Aorta (tissue), 5 donors: ENCODE measurements at regions of chr12 and their contacts with region 1.

Region 1: DNA sequence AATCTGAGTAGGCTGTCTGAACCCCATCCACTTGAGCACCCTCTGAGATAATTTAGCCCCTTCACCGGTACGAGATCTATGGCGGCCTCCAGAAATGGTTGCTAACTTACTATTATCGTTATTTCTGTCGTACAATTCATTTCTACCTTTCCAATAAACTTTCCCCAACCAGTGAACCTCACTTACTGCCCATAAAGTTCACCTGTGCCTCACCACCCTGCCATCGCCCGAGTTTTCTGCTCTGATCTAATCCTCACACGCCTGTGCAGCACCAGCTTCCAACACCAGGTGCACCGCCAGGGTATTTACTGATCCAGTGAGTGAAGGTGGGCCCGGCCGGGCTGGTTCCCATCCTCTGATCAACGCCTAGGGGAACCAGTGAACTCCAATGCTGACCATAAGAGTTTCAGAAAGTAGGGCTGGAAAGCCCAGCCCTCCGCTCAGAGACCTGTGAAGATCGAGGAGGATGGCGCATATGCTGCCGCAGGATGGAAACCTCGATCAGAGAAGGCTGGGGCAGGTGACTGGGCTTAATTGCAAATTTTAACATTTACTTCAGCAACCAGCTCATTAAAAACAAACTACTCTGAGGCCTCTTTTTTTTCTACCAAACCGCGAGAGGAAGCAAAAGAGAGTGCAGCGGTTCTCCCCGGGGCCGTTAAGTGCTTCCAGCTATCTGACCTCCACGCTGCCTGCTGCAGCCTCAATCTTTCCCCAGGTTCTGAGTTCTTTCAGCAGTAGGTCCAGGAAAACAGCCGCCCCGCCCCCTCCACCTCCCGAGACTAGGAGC is 664 bp upstream of the MYL6B start:
- DNase-seq: peak; percentile 62 to 85
- ATAC-seq: peak; percentile 24
- H3K4me3 ChIP-seq: peak overlapping the region; percentile 66
- H3K27ac ChIP-seq: peak overlapping the region in 1 of 2 donors; percentile 62
- H3K4me1 ChIP-seq: no peaks in the 10 kb centered on the region
- H3K27me3 ChIP-seq: no peaks in the 10 kb centered on the region

Region 2: DNA sequence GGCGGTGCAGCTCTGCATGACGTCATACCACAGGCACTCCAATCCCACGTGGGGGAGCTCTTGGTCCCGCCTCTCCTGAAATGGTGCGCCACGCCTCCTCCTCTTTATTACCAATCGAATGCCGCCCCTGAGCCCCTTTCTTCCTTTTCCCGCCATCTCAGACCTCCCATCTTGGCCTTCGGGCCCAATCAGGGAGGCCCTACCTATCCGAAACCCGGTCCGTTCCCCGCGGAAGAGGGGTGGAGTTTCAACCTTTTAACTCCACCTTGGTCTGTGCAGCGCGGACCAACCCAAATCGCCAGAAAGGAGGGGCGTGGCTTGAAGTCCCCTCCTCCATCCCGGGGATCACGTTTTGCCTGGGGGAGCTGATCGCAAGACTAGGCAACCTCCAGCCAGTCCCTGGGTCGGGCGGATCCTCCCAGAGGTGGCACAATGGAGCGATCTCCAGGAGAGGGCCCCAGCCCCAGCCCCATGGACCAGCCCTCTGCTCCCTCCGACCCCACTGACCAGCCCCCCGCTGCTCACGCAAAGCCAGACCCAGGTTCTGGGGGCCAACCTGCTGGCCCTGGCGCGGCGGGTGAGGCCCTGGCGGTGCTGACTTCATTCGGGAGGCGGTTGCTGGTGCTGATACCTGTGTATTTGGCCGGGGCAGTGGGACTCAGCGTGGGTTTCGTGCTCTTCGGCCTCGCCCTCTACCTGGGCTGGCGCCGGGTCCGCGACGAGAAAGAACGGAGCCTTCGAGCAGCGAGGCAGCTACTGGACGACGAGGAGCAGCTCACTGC is 23.6 kb before region 1 on chr12 and contains the start of gene ESYT1:
- intact Hi-C with region 1: loop called in 1 of 2 experiments (anchors 2 kb)
- DNase-seq: peak; percentile 98 to 99
- ATAC-seq: peak; percentile 96
- H3K4me3 ChIP-seq: peak within 1 kb of the TSS; percentile 50 to 67
- H3K27ac ChIP-seq: peak within 1 kb of the TSS in 1 of 2 donors; percentile 61
- H3K4me1 ChIP-seq: peaks cover 0 to 5% of the 10 kb centered on the region in 2 donors
- H3K27me3 ChIP-seq: no peaks in the 10 kb centered on the region
- total RNA-seq, gene ESYT1: 103 to 106 TPM

Region 3: DNA sequence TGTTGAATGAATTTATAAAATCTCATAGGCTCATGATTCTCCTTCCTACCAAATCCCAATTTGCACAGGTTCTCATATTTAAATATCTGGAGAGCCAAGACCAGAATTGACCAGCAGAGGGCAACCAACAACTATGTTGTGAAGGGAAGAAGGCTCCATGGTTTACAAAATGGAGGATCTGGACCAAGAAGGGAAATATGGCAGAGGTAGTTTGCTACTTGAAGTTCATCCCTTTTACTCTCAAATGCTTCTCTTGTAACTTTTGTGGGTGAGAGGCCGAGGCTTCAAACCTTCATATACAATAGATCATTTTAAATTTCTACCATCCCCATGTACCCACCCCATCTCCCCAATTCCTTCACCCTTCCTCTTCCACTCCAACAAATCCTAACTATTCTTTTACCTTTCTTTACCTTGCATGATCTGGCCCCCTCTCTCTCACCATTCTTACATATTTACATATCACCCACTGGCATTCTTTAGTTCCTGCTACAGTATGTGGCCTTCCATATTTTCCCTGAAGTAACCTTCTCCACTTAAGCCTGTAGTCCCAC is 41.4 kb after region 1 on chr12:
- intact Hi-C with region 1: no loop called
- DNase-seq: peak in 1 of 2 donors; percentile 80
- ATAC-seq: peak; percentile 50
- H3K4me3 ChIP-seq: no peak overlapping the region
- H3K27ac ChIP-seq: no peak overlapping the region
- H3K4me1 ChIP-seq: no peaks in the 10 kb centered on the region
- H3K27me3 ChIP-seq: no peaks in the 10 kb centered on the region

Region 4: GRCh38 chr12:56413392-56413791 is 261.7 kb after region 1 on chr12:
- intact Hi-C with region 1: no loop called
- DNase-seq: no peak
- ATAC-seq: no peak
- H3K4me3 ChIP-seq: no peak overlapping the region
- H3K27ac ChIP-seq: no peak overlapping the region
- H3K4me1 ChIP-seq: no peaks in the 10 kb centered on the region
- H3K27me3 ChIP-seq: no peaks in the 10 kb centered on the region